Esophagus squamous epithelium (tissue), 5 donors: ENCODE measurements at regions of chr22 and their contacts with region 1.

Region 1: DNA sequence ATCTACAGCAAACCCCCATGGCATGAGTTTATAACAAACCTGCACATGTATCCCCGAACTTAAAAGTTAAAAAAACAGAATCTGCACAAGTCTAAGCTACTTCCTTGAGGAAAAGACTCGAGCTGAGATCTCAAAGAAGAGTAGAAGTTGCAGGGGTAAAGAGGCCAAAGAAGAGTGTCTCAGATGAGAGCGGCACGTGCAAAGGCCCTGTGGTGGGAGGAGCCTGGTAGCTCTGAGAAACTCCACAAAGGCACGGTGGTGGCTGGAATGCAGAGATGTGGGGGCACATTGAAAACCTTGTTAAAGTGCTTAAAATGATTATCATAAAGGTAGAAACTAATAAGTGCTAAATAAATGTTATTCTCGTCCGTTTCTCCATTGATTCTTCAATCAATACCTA is 103.2 kb upstream of the GRK3 start:
- DNase-seq: no peak
- H3K4me3 ChIP-seq: no peak overlapping the region
- H3K27ac ChIP-seq: no peak overlapping the region
- H3K4me1 ChIP-seq: no peaks in the 10 kb centered on the region
- H3K27me3 ChIP-seq: no peaks in the 10 kb centered on the region
- CTCF ChIP-seq: no peak
- POLR2A ChIP-seq: no peak

Region 2: GRCh38 chr22:25148149-25148691 is 313.1 kb before region 1 on chr22:
- intact Hi-C with region 1: no loop called
- DNase-seq: no peak
- H3K4me3 ChIP-seq: no peak overlapping the region
- H3K27ac ChIP-seq: peak overlapping the region; percentile 43 to 79 (median 71)
- H3K4me1 ChIP-seq: peaks cover 20 to 89% (median 51%) of the 10 kb centered on the region in 3 donors
- H3K27me3 ChIP-seq: no peaks in the 10 kb centered on the region
- CTCF ChIP-seq: no peak
- POLR2A ChIP-seq: no peak

Region 3: GRCh38 chr22:25702040-25702439 is 240.7 kb after region 1 on chr22:
- intact Hi-C with region 1: loop called (anchors 5 kb)
- DNase-seq: no peak
- H3K4me3 ChIP-seq: no peak overlapping the region
- H3K27ac ChIP-seq: no peak overlapping the region
- H3K4me1 ChIP-seq: peaks cover 0 to 16% (median 0%) of the 10 kb centered on the region in 3 donors
- H3K27me3 ChIP-seq: no peaks in the 10 kb centered on the region
- CTCF ChIP-seq: peak in 4 of 6 experiments; percentile 30 to 56 (median 36)
- POLR2A ChIP-seq: no peak

Region 4: DNA sequence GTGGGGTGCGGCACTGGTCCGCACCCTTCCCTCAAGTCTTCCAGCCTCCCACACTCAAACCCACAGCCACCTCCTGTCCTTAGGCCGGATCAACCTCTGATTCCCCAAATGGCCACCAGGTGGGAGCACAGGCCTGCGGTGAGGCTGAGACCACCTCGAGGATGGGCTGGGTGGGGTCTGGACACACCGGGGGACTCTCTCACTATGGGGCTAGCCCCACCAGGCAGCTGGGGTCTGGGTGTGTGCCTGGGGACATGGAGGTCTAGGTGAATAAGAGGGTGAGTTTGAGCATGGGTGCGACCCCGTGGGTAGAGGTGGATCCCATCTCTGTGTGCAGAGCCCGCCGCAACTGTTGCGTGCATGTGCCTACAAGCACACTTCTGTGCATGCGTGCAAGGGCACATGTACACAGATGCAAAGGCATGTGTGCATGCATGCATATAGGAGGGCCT is 313.3 kb after region 1 on chr22:
- intact Hi-C with region 1: loop called (anchors 5 kb)
- DNase-seq: no peak
- H3K4me3 ChIP-seq: no peak overlapping the region
- H3K27ac ChIP-seq: no peak overlapping the region
- H3K4me1 ChIP-seq: no peaks in the 10 kb centered on the region
- H3K27me3 ChIP-seq: no peaks in the 10 kb centered on the region
- CTCF ChIP-seq: peak in 4 of 6 experiments; percentile 12 to 36 (median 22)
- POLR2A ChIP-seq: no peak